PC-3 (cell line): ENCODE measurements at regions of chr6 and their contacts with region 1.

Region 1: DNA sequence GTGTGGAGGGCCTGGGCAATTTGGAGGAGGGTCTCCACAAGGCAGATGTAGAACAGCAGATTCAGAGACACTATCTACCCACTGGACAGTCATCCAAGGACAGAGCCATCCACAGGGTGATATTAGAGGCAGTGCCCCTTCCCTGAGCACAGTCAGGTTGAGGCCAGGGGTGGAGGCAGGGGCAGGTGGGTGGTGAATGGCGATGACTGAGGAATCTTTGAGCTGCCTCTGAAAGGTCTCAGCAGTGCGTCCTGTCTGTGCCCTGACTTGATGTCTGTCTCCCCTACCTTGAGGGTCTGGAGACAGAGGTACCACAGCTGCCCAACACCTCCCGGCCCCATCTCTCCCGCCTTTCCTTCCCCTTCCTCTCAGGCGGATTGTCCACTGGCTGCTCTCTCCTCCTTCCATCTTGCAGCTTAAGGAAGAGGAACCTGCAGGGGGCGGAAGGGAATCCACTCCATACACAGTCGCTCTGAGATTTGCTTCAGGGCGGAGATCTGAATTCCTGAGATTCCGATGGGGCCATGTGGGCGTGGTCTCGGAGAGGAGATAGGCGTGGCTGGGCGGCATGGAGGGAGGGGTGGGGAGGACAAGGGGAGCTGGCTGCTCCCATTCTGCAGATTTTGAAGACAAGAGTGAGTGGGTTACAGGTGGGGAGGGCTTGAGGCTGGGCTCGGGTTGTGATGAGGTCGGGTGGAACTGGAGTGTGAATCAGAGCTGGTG is 1.7 kb downstream of the MUCL3 start:
- DNase-seq: peak; percentile 96
- ATAC-seq: peak; percentile 94
- H3K4me3 ChIP-seq: no peak overlapping the region
- H3K27ac ChIP-seq: no peak overlapping the region
- H3K4me1 ChIP-seq: peaks cover 9% of the 10 kb centered on the region; the same call in 1 of the 2 replicates
- H3K27me3 ChIP-seq: no peaks in the 10 kb centered on the region
- CTCF ChIP-seq: peak; percentile 80

Region 2: DNA sequence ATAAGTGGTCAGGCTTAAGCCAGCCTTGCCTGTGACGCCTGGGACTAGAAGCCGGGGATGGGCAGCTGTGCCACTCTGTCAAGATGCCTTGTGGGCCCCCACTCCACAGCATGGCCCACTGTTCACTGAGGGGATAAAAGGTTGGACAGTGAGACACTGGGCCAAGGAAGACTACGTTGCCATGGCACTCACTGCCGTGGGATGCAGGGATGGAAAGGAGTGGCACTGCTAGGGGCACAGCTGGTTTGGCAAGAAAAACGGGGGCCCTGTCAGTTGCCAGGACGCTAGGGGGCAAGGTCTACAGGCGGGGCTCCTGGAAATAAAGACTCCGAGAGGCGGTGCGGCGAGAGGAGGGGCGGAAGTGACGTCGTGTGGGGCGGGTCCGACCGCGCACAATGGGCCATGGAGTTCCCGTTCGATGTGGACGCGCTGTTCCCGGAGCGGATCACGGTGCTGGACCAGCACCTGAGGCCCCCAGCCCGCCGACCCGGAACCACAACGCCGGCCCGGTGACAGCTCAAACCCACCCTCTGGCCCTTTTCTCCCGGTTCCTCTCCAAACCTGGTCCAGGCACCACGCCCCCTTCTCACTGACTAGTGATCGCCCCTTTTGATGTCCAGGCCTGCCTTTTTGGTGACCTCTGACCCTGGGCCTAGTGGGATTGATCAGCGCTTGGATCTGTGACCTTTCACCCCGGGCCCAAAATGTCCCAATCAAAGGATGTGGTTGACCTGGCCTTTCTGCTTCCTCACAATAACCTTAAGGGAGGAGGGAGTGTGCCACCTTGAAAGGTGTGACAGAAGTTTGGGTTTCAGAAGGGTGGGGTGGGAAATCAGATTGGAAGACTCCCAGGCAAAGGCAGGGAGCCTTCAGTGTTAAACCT is 315.8 kb before region 1 on chr6 and contains the start of gene ATAT1:
- CTCF ChIA-PET with region 1: no interaction called
- POLR2A ChIA-PET with region 1: no interaction called
- intact Hi-C with region 1: no loop called
- DNase-seq: peak; percentile 60
- ATAC-seq: peak; percentile 85
- H3K4me3 ChIP-seq: peak within 1 kb of the TSS; percentile 61
- H3K27ac ChIP-seq: peak within 1 kb of the TSS; percentile 18; the same call in 1 of the 2 replicates
- H3K4me1 ChIP-seq: peaks cover 4% of the 10 kb centered on the region; the same call in 1 of the 2 replicates
- H3K27me3 ChIP-seq: no peaks in the 10 kb centered on the region
- CTCF ChIP-seq: no peak
- total RNA-seq, gene ATAT1: 4.6 and 6.1 TPM in 2 replicates

Region 3: DNA sequence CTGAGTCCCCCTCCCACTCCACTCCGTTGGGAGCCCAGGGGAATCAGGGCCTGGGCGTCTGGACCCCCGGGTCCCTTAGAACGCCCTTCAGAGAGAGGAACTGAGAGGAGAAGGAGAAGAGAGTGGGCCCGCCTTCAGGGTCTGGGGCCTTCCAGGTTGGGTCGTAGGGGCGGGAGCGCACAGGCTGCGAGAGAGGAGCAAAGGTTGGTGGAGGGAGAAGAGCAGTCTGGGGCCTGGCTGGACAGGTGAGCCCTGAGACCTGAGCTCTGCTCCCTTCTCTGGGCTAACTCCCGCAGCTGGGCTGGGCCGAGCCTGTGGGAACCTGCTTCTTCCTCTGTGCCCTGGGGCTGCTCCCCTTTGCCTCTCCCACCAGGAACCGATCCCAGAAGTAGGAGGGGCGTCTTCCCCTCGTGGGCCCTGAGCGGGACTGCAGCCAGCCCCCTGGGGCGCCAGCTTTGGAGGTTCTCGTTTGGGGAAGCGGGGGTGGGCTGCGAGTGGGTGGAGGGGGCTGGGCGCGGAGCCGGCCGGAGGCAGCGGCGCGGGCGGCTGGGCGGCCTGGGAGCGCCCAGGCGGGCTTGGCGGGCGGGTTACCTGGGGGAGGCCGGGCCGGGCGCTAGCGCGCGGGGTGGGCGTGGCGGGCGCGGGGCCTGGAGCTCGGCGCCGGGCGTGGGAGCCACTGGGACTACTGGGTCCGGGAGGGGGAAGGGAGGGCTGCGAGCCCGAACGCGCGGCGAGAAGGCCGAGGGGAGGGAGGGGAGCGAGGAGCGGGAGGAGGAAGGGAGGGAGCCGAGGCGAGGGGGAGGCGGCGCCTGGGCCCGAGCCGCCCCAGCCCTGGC is 58.6 kb before region 1 on chr6 and contains the start of gene DDR1:
- CTCF ChIA-PET with region 1: no interaction called
- POLR2A ChIA-PET with region 1: no interaction called
- intact Hi-C with region 1: no loop called
- DNase-seq: peak; percentile 75
- ATAC-seq: peak; percentile 31
- H3K4me3 ChIP-seq: peak within 1 kb of the TSS; percentile 70
- H3K27ac ChIP-seq: peak within 1 kb of the TSS; percentile 93
- H3K4me1 ChIP-seq: peaks cover 58% of the 10 kb centered on the region
- H3K27me3 ChIP-seq: no peaks in the 10 kb centered on the region
- CTCF ChIP-seq: no peak
- total RNA-seq, gene DDR1: 108 and 144 TPM in 2 replicates

Region 4: DNA sequence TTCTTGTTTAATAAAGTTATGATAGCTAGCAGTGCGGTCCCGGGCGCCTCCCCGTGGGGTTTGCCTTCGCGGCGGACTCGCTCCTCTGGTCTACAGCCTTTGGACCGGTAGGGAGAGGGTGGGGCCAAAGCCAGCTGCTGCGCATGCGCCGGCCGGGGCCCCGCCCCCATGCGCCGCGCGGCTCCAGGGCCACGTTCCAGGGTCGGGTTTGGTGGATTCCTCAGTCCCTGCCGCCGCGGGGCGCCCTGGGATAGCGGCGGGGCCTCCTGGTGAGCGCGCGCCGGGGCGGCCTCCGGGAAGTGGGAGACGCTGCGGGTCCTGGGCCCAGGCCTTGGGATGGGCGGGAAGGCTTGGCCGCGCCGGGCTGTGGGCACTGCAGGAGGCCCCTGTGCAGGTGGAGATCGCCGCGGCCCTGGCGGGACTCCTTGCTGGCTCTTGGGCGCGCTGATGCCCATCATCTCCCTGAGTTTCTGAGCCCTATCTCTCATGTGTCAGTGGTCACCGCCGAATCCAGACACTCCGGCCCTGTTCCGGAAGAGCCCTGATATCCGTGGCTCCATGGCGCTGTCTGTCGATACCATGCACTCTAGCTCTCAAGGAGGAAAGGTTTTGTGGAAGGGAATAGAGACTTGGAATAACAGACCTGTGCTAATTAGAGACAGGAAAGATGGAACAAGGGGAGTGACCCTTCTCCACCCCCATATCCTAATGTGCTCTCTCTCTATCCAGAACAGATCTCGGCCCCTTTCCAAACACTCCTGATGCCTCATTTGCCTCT is 28.2 kb before region 1 on chr6 and contains the start of gene VARS2:
- CTCF ChIA-PET with region 1: interaction called, 10 read pairs
- POLR2A ChIA-PET with region 1: no interaction called
- intact Hi-C with region 1: no loop called
- DNase-seq: peak; percentile 97
- ATAC-seq: peak; percentile 87
- H3K4me3 ChIP-seq: peak within 1 kb of the TSS; percentile 67
- H3K27ac ChIP-seq: peak within 1 kb of the TSS; percentile 51
- H3K4me1 ChIP-seq: peaks cover 28% of the 10 kb centered on the region
- H3K27me3 ChIP-seq: no peaks in the 10 kb centered on the region
- CTCF ChIP-seq: peak; percentile 50
- total RNA-seq, gene VARS2: 66.5 and 87.8 TPM in 2 replicates

Region 5: GRCh38 chr6:30974488-30975252 is 32.2 kb after region 1 on chr6:
- CTCF ChIA-PET with region 1: no interaction called
- POLR2A ChIA-PET with region 1: no interaction called
- intact Hi-C with region 1: no loop called
- DNase-seq: peak; percentile 55
- ATAC-seq: peak; percentile 80
- H3K4me3 ChIP-seq: no peak overlapping the region
- H3K27ac ChIP-seq: no peak overlapping the region
- H3K4me1 ChIP-seq: peaks cover 10% of the 10 kb centered on the region; the same call in 1 of the 2 replicates
- H3K27me3 ChIP-seq: no peaks in the 10 kb centered on the region
- CTCF ChIP-seq: no peak

Region 6: DNA sequence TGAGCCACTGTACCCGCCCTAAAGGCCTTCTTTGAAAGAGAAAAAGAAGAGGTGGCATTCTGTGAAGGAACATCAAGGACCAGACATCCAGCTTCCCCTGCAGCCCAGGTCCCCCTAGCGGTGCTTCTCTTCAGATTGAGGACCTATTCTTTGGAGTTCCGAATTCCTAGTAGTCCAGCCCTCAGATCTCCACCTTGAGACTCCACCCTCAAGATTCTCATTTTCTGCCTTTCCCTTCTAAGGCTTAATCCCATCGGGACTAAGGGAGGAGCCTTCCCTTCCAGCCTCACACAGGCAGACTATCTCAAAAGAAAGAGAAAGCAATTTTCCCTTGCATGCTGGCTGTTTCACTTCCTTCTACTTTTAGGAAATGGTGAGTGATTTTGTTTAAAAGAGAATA is 100.3 kb after region 1 on chr6:
- CTCF ChIA-PET with region 1: interaction called, 3 read pairs
- POLR2A ChIA-PET with region 1: no interaction called
- intact Hi-C with region 1: loop called (anchors 2 kb)
- DNase-seq: peak; percentile 80
- ATAC-seq: peak; percentile 73
- H3K4me3 ChIP-seq: no peak overlapping the region
- H3K27ac ChIP-seq: no peak overlapping the region
- H3K4me1 ChIP-seq: peaks cover under 1% of the 10 kb centered on the region
- H3K27me3 ChIP-seq: no peaks in the 10 kb centered on the region
- CTCF ChIP-seq: peak; percentile 67

Region 7: DNA sequence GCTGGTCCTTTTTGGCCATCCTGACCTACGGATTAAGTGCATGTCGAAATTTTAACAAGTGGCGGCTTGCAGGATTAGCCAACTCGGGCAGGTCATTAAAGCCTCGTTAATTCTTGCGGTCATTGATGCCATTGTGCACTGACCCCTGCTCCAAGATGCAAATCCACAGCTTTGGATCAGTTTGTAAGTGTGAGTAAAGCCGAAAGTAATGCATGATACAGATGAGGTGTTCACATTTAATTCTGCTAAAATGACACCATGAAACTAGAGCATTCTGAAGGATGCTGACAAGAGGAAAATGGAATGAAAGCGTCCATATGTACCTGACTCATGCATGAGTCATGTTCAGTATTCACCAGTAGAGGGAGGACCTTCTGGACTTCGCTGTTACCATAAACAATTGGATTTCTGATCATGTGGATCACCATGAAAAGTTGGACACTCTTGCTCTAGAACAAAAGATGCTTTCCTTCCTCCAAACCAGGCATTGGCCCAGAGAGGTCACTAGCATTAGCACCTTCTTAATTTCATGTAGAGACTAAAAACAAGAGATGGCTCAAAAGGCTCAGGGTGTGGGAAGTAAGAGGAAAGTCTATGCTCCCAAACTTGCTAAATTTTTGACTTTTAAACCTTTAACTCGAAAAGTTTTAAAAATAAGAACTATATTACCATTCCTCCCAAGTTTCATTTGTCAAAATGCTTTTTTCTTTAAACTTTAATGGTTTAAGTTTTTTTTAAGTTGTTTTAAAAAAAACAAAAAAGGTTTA is 115.8 kb after region 1 on chr6:
- CTCF ChIA-PET with region 1: no interaction called
- POLR2A ChIA-PET with region 1: no interaction called
- intact Hi-C with region 1: loop called (anchors 1 kb)
- DNase-seq: peak; percentile 97
- ATAC-seq: peak; percentile 90
- H3K4me3 ChIP-seq: peak overlapping the region; percentile 39; the same call in 1 of the 2 replicates
- H3K27ac ChIP-seq: peak overlapping the region; percentile 92
- H3K4me1 ChIP-seq: peaks cover 48% of the 10 kb centered on the region
- H3K27me3 ChIP-seq: no peaks in the 10 kb centered on the region
- CTCF ChIP-seq: peak; percentile 50